Activated B cell treated with CpG ODN at 0.5 μM for 24 hours (primary cell): ENCODE measurements at regions of chr1 and their contacts with region 1.

Region 1: DNA sequence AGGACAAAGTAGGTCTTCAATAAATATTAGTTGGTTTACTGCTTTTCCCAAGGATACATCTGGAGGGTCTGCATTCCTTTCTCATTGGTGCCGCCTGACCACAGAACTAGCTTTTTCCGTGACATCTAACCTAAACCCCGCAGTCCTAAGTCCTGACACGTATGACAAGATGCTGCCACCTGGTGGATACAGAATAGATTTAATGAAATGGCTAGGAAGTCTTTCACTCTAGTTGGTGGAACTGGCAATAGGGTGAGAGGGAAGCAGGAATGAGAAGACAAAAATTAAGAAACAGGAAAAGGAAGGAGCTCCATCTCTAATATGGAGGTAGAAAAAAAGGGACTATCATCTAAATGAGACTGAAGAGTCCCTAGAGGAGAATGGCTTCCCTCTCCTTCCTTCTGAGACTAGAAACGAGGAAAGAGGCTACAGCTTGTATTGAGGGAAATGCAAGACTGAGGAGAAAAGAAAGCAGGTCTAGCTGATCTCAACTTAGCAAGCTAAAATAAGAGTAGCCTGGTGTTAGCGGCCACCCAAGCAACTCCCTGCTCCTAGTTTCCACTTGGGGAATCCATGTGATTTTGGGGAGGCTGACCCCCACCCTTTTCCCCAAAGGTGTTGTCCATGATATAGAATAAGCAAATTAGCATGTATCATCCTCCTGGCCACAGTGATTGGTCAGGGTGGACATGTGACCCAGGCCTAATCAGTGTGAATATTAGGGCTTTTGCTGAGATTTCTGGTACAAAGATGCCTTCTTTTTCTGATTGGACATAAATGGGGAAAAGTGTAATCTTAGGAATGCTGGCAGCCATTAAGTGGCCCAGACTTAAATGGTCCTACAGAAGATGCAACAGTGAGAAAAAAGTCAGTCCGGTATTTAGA is 5.9 kb downstream of the RFX5 start:
- DNase-seq: no peak
- ATAC-seq: peak; percentile 86
- H3K4me3 Mint-ChIP-seq: no peak overlapping the region
- H3K27ac Mint-ChIP-seq: peak overlapping the region; percentile 100
- H3K4me1 Mint-ChIP-seq: peaks cover 47% of the 10 kb centered on the region
- H3K27me3 Mint-ChIP-seq: no peaks in the 10 kb centered on the region
- CTCF ChIP-seq: no peak

Region 2: DNA sequence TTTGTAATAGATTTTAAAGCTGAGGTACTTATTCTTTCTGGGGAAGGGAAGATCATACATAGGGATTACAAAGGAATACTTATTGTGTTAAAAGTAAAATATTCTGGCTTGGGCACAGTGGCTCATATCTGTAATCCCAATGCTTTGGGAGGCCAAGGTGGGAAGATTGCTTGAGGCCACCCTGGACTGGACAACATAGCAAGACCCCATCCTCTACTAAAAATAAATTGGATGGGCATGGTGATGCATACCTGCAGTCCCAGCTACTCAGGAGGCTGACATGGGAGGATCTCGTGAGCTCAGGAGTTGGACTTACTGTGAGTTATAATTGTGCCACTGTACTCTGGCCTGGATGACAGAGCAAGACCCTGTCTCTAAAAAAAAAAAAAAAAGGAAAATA is 243.0 kb before region 1 on chr1:
- CTCF ChIA-PET with region 1: interaction called, 12 read pairs
- POLR2A ChIA-PET with region 1: interaction called, 5 read pairs
- intact Hi-C with region 1: no loop called
- DNase-seq: no peak
- ATAC-seq: no peak
- H3K4me3 Mint-ChIP-seq: no peak overlapping the region
- H3K27ac Mint-ChIP-seq: no peak overlapping the region
- H3K4me1 Mint-ChIP-seq: no peaks in the 10 kb centered on the region
- H3K27me3 Mint-ChIP-seq: no peaks in the 10 kb centered on the region
- CTCF ChIP-seq: no peak

Region 3: GRCh38 chr1:151281969-151282882 is 58.9 kb before region 1 on chr1 and contains the start of gene ZNF687:
- CTCF ChIA-PET with region 1: interaction called, 6 read pairs
- POLR2A ChIA-PET with region 1: interaction called, 14 read pairs
- intact Hi-C with region 1: loop called (anchors 1 kb)
- DNase-seq: peak; percentile 96
- ATAC-seq: peak; percentile 88
- H3K4me3 Mint-ChIP-seq: peak within 1 kb of the TSS; percentile 99
- H3K27ac Mint-ChIP-seq: peak within 1 kb of the TSS; percentile 99
- H3K4me1 Mint-ChIP-seq: peaks cover 54% of the 10 kb centered on the region
- H3K27me3 Mint-ChIP-seq: no peaks in the 10 kb centered on the region
- CTCF ChIP-seq: no peak
- total RNA-seq, gene ZNF687: 38.8 and 40.3 TPM in 2 replicates

Region 4: DNA sequence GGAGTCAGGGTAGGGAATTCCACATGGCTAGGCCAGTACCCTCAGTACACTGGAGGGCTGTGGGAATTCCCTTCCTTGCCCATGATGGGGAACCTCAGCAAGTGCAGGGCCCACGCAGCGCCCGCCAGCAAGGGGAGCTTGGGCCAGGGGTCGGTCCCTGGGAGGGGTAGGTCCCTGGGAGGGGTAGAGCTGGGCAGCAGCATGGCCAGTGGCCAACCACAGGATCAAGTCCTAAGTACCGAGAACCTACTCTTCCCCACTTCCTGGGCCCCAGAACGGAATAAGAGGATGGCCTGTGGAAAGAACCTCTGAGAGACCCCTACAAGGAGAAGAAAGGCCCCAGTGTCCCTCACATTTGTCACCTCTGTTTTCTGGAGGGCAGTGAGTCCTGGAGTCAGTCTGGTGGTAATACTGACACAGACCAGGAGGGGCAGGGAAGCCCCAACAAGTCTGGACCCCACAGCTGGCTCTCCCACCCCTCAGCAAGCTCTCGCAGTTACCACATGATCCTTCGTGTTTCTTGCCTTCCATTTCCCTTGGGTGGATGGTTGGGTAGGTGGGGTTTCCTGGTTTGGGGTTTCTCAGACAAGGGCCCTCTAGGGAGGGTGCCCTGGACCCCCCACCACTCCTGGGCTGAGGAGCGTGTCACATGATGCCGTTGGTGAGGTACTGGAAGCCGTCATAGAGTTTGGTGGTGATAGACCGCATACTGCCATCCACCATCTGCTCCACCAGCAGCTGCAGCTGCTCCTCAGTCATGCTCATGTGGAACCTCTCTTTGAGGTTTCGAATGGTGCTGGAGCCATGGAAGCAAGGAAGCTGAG is 48.7 kb before region 1 on chr1:
- CTCF ChIA-PET with region 1: interaction called, 13 read pairs
- POLR2A ChIA-PET with region 1: no interaction called
- intact Hi-C with region 1: no loop called
- DNase-seq: no peak
- ATAC-seq: peak; percentile 51
- H3K4me3 Mint-ChIP-seq: no peak overlapping the region
- H3K27ac Mint-ChIP-seq: peak overlapping the region; percentile 65
- H3K4me1 Mint-ChIP-seq: peaks cover 13% of the 10 kb centered on the region
- H3K27me3 Mint-ChIP-seq: no peaks in the 10 kb centered on the region
- CTCF ChIP-seq: no peak

Region 5: GRCh38 chr1:151311589-151312331 is 29.4 kb before region 1 on chr1:
- CTCF ChIA-PET with region 1: interaction called, 14 read pairs
- POLR2A ChIA-PET with region 1: interaction called, 5 read pairs
- intact Hi-C with region 1: no loop called
- DNase-seq: no peak
- ATAC-seq: peak; percentile 98
- H3K4me3 Mint-ChIP-seq: no peak overlapping the region
- H3K27ac Mint-ChIP-seq: peak overlapping the region; percentile 19
- H3K4me1 Mint-ChIP-seq: peaks cover 21% of the 10 kb centered on the region
- H3K27me3 Mint-ChIP-seq: no peaks in the 10 kb centered on the region
- CTCF ChIP-seq: no peak

Region 6: DNA sequence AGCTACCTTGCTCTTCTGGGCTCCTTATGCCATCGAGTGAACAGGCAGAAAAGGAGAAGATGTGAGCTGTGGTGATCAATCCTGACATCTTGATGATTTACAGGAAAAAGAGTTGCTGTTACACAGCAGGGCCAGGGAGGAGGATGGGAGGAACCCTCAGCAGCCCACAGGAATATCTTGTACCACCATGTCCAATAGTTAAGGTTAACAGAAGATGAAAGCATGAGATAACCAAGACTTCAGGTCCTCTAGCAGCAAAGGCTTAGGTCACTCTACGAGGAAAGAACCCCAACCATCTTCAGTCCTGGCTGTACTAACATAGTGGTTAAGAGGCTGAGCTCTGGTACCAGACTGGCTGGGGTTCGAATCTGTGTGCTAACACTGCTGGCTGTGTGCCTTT is 43.5 kb after region 1 on chr1:
- CTCF ChIA-PET with region 1: interaction called, 4 read pairs
- POLR2A ChIA-PET with region 1: interaction called, 10 read pairs
- intact Hi-C with region 1: no loop called
- DNase-seq: no peak
- ATAC-seq: no peak
- H3K4me3 Mint-ChIP-seq: no peak overlapping the region
- H3K27ac Mint-ChIP-seq: no peak overlapping the region
- H3K4me1 Mint-ChIP-seq: no peaks in the 10 kb centered on the region
- H3K27me3 Mint-ChIP-seq: no peaks in the 10 kb centered on the region
- CTCF ChIP-seq: no peak

Region 7: DNA sequence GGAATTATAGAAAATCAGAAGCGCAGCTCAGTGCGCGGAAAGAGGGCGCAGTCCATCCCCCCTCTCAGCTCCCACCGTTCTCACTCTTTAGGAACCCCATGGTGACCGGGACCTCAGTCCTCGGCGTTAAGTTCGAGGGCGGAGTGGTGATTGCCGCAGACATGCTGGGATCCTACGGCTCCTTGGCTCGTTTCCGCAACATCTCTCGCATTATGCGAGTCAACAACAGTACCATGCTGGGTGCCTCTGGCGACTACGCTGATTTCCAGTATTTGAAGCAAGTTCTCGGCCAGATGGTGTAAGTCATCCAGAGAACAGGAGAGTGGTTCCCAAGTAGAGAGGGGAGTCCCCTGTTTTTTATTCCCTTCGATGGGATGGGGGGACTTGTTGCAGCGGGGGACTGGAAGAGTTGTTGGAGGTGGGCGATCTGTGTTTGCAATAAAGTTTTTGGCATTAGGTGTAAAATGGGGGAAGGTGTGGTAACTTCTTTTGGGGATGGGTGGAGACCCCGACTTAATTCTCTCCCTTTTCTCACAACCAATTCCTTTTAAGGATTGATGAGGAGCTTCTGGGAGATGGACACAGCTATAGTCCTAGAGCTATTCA is 58.9 kb after region 1 on chr1:
- CTCF ChIA-PET with region 1: interaction called, 14 read pairs
- POLR2A ChIA-PET with region 1: interaction called, 37 read pairs
- intact Hi-C with region 1: loop called (anchors 1 kb)
- DNase-seq: no peak
- ATAC-seq: peak; percentile 3
- H3K4me3 Mint-ChIP-seq: peak overlapping the region; percentile 89
- H3K27ac Mint-ChIP-seq: peak overlapping the region; percentile 98
- H3K4me1 Mint-ChIP-seq: peaks cover 31% of the 10 kb centered on the region
- H3K27me3 Mint-ChIP-seq: no peaks in the 10 kb centered on the region
- CTCF ChIP-seq: no peak

Region 8: GRCh38 chr1:151465026-151465425 is 123.9 kb after region 1 on chr1:
- CTCF ChIA-PET with region 1: no interaction called
- POLR2A ChIA-PET with region 1: no interaction called
- intact Hi-C with region 1: no loop called
- DNase-seq: no peak
- ATAC-seq: no peak
- H3K4me3 Mint-ChIP-seq: no peak overlapping the region
- H3K27ac Mint-ChIP-seq: no peak overlapping the region
- H3K4me1 Mint-ChIP-seq: peaks cover 3% of the 10 kb centered on the region
- H3K27me3 Mint-ChIP-seq: peaks cover 30% of the 10 kb centered on the region
- CTCF ChIP-seq: no peak